ENCODE measurements at regions of chr9 and their contacts with region 1.

Region 1: DNA sequence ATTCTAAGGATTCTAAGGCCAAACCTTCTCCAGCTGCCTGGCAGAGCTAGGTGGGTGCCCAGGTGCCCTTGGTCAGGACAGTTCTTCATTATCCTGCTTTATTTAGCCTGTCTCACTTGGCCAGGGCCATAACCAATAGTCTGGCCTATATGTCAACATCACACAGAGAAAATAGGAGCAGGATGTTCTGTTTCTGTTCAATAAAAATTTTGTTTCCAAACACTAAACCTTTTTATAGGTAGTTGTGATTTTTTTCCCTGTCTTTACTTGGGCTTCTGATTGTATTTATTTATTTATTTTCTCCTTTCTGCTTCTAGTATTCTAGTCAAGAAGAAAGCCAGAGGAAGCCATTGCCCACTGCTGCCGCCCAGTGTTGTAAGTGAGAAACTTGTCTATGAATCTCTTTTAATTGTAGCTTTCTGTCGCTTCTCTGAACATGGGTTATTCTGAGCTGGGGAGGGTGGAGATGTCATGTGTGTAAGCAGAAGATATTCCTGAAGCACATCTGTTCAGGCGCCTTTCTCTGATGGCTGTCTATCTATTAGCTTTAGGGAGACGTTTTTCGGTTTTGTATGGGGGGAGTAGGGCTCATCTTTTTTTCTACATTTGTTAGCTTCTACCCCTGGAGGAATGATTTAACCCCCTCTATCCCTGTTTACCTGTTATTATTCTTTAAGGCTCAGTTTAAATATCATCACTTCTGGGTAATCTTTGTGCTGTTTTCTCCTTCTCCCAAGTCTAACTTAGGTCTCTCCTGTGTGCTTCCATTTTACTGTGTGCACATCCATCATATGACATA is 97.1 kb downstream of the UNC13B start:
- DNase-seq: peak in 7 of 9 donors; percentile 12 to 51 (median 38)
- ATAC-seq: peak; percentile 58
- H3K4me3 ChIP-seq: no peak overlapping the region
- H3K4me3 Mint-ChIP-seq: no peak overlapping the region
- H3K27ac ChIP-seq: no peak overlapping the region
- H3K27ac Mint-ChIP-seq: no peak overlapping the region
- H3K4me1 ChIP-seq: no peaks in the 10 kb centered on the region
- H3K4me1 Mint-ChIP-seq: no peaks in the 10 kb centered on the region
- H3K27me3 ChIP-seq: no peaks in the 10 kb centered on the region
- H3K27me3 Mint-ChIP-seq: peaks cover 0 to 12% (median 6%) of the 10 kb centered on the region in 5 donors

Region 2: DNA sequence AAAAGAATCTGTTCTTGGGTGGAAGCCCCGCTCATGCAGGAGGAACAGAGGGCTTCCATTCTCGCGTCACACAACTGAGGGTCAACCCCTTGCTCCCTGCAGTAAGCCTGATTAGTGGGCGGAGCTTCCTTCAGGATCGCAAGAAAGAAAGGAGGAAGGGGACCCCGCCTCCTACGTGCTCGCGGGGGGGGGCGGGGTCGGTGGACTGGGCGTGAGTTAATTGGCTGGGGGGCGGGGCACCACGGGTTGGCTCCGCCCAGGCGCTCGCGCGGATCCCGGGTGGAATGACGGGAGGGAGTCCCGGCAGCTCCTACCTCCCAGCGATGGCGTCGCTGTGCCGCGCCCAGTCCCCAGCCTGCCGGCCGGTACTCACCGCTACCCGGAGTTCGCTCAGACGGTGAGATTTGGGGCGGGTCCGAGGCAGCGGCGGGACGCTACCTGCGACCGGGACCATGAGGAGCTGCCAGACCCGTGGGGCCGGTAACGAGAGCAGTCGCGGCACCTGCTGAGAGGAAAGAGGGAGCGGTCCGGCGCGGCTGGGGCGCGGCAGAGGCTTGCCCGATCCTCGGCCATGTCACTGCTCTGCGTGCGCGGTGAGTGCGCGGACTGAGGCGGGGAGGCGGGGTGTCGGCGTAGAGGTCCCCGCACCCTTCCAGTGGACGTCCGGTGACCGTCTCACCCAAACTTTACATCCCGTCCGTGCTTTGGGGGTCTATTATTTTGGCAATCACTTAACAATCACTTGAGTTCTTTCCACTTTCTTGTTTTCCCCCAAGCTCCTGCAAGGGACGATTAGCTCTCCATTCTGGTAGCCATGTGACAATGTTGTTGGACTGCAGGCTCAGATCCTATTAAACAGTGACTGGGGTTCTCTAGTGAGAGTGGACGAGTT is 96.9 kb before region 1 on chr9 and contains the start of gene UNC13B:
- CTCF ChIA-PET with region 1: interaction called, 3 read pairs
- POLR2A ChIA-PET with region 1: interaction called, 3 read pairs
- intact Hi-C with region 1: loop called in 1 of 2 experiments (anchors 1 kb)
- DNase-seq: peak; percentile 46 to 75 (median 60)
- ATAC-seq: peak; percentile 94
- H3K4me3 ChIP-seq: peak within 1 kb of the TSS; percentile 57
- H3K4me3 Mint-ChIP-seq: peak within 1 kb of the TSS; percentile 91 to 97 (median 93)
- H3K27ac ChIP-seq: peak within 1 kb of the TSS; percentile 9
- H3K27ac Mint-ChIP-seq: peak within 1 kb of the TSS in 8 of 9 donors; percentile 17 to 86 (median 48)
- H3K4me1 ChIP-seq: no peaks in the 10 kb centered on the region
- H3K4me1 Mint-ChIP-seq: peaks cover 0 to 40% (median 32%) of the 10 kb centered on the region in 7 donors
- H3K27me3 ChIP-seq: no peaks in the 10 kb centered on the region
- H3K27me3 Mint-ChIP-seq: peaks cover 0 to 31% (median 0%) of the 10 kb centered on the region in 5 donors
- total RNA-seq, gene UNC13B: 0.24 to 1.6 (median 1.3) TPM

Region 3: GRCh38 chr9:35481347-35481975 is 222.6 kb after region 1 on chr9:
- CTCF ChIA-PET with region 1: no interaction called
- POLR2A ChIA-PET with region 1: no interaction called
- intact Hi-C with region 1: no loop called
- DNase-seq: peak in 3 of 9 donors; percentile 14 to 38 (median 19)
- ATAC-seq: peak; percentile 68
- H3K4me3 ChIP-seq: no peak overlapping the region
- H3K4me3 Mint-ChIP-seq: no peak overlapping the region
- H3K27ac ChIP-seq: no peak overlapping the region
- H3K27ac Mint-ChIP-seq: no peak overlapping the region
- H3K4me1 ChIP-seq: no peaks in the 10 kb centered on the region
- H3K4me1 Mint-ChIP-seq: no peaks in the 10 kb centered on the region
- H3K27me3 ChIP-seq: peaks cover 0 to 4% of the 10 kb centered on the region in 2 donors
- H3K27me3 Mint-ChIP-seq: peaks cover 0 to 15% (median 8%) of the 10 kb centered on the region in 5 donors